Activated CD4-positive, alpha-beta T cell treated with anti-CD3 and anti-CD28 coated beads for 36 hours (primary cell): ENCODE measurements at regions of chr4 and their contacts with region 1.

Region 1: GRCh38 chr4:112636688-112637551 is at the starts of genes LARP7 and ZGRF1:
- DNase-seq: peak; percentile 99
- ATAC-seq: peak; percentile 95
- H3K4me3 Mint-ChIP-seq: no peak within 1 kb of the TSS
- H3K27ac Mint-ChIP-seq: peak within 1 kb of the TSS; percentile 68
- H3K4me1 Mint-ChIP-seq: peaks cover 23% of the 10 kb centered on the region
- H3K27me3 Mint-ChIP-seq: no peaks in the 10 kb centered on the region
- total RNA-seq, gene LARP7: 46.5 to 47.1 TPM
- total RNA-seq, gene ZGRF1: 38.4 to 45.0 TPM

Region 2: GRCh38 chr4:112119353-112119783 is 517.6 kb before region 1 on chr4:
- CTCF ChIA-PET with region 1: no interaction called
- POLR2A ChIA-PET with region 1: no interaction called
- intact Hi-C with region 1: loop called in 1 of 2 experiments (anchors 2 kb)
- DNase-seq: peak; percentile 24
- ATAC-seq: peak; percentile 87
- H3K4me3 Mint-ChIP-seq: no peak overlapping the region
- H3K27ac Mint-ChIP-seq: peak overlapping the region; percentile 83
- H3K4me1 Mint-ChIP-seq: peaks cover 15% of the 10 kb centered on the region
- H3K27me3 Mint-ChIP-seq: no peaks in the 10 kb centered on the region

Region 3: GRCh38 chr4:112284662-112285411 is 352.1 kb before region 1 on chr4:
- CTCF ChIA-PET with region 1: no interaction called
- POLR2A ChIA-PET with region 1: no interaction called
- intact Hi-C with region 1: loop called (anchors 2 to 5 kb)
- DNase-seq: peak; percentile 43
- ATAC-seq: no peak
- H3K4me3 Mint-ChIP-seq: peak overlapping the region; percentile 96
- H3K27ac Mint-ChIP-seq: peak overlapping the region; percentile 96
- H3K4me1 Mint-ChIP-seq: peaks cover 73% of the 10 kb centered on the region
- H3K27me3 Mint-ChIP-seq: no peaks in the 10 kb centered on the region

Region 4: GRCh38 chr4:112517067-112517634 is 119.8 kb before region 1 on chr4:
- CTCF ChIA-PET with region 1: no interaction called
- POLR2A ChIA-PET with region 1: no interaction called
- intact Hi-C with region 1: no loop called
- DNase-seq: peak; percentile 56
- ATAC-seq: no peak
- H3K4me3 Mint-ChIP-seq: peak overlapping the region; percentile 39
- H3K27ac Mint-ChIP-seq: no peak overlapping the region
- H3K4me1 Mint-ChIP-seq: peaks cover 45% of the 10 kb centered on the region
- H3K27me3 Mint-ChIP-seq: peaks cover 82% of the 10 kb centered on the region

Region 5: DNA sequence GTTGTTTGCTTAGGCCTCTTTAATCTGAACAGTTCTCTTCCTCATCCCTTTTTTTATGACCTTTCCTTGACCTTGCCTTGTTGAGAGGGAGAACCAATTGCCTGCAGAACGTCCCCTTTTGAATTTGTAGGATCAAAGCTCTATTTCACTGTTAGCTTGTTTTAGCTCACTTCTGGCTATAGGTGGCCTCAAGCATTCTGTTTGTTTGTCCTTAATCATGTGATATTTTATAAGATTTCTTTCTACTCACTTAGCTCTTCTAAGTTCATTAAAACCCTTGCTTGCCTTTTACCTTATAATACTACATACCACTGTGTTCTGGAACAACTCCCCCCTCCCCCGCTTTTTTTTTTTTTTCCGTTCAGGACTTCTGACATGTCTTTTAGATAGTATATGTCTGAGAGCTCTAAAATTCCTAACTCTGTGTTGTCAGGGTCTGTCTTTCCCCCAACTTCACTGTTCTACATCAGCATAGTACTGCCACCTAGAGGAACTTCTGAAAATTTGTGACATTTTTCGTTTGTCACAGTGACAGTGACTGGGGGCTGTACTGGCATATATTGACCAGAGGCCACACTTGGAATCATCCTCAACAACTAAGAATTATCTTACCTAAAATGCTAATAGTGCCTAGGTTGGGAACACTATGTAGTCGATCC is 128.5 kb after region 1 on chr4:
- CTCF ChIA-PET with region 1: interaction called, 12 read pairs
- POLR2A ChIA-PET with region 1: no interaction called
- intact Hi-C with region 1: loop called (anchors 1 kb)
- DNase-seq: peak; percentile 11
- ATAC-seq: peak; percentile 60
- H3K4me3 Mint-ChIP-seq: no peak overlapping the region
- H3K27ac Mint-ChIP-seq: no peak overlapping the region
- H3K4me1 Mint-ChIP-seq: no peaks in the 10 kb centered on the region
- H3K27me3 Mint-ChIP-seq: peaks cover 4% of the 10 kb centered on the region

Region 6: GRCh38 chr4:112938461-112939058 is 301.6 kb after region 1 on chr4:
- CTCF ChIA-PET with region 1: no interaction called
- POLR2A ChIA-PET with region 1: no interaction called
- intact Hi-C with region 1: loop called (anchors 1 to 2 kb)
- DNase-seq: no peak
- ATAC-seq: no peak
- H3K4me3 Mint-ChIP-seq: no peak overlapping the region
- H3K27ac Mint-ChIP-seq: no peak overlapping the region
- H3K4me1 Mint-ChIP-seq: no peaks in the 10 kb centered on the region
- H3K27me3 Mint-ChIP-seq: peaks cover 8% of the 10 kb centered on the region